AG04449 (cell line): ENCODE measurements at regions of chr4 and their contacts with region 1.

Region 1: GRCh38 chr4:6327041-6327917 is 57.6 kb downstream of the WFS1 start:
- DNase-seq: no peak
- H3K4me3 ChIP-seq: no peak overlapping the region
- CTCF ChIP-seq: peak; percentile 95

Region 2: DNA sequence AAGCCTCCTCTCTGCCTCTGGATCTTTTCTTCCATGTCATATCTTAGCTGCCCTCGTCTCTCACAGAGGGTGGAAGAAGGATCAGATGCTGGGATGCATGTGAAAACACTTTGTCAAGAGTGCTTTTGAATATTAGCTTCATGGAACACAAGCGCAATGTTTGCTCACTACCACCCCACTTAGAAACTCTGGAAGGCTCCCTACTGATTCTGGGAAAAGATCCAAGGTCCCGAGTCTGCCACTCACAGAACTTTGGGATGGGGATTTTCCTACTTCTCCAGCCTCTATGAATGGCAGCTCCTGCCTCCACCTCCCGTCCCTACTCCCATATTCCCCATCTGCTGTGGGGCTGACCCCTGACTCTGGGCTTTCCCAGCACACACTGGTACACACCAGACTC is 394.2 kb before region 1 on chr4:
- CTCF ChIA-PET with region 1: no interaction called
- POLR2A ChIA-PET with region 1: no interaction called
- DNase-seq: no peak
- H3K4me3 ChIP-seq: no peak overlapping the region
- CTCF ChIP-seq: no peak

Region 3: GRCh38 chr4:6269616-6270511 is 57.4 kb before region 1 on chr4 and contains the start of gene WFS1:
- CTCF ChIA-PET with region 1: interaction called, 1,359 read pairs
- POLR2A ChIA-PET with region 1: no interaction called
- DNase-seq: peak; percentile 83
- H3K4me3 ChIP-seq: peak within 1 kb of the TSS; percentile 87
- CTCF ChIP-seq: no peak

Region 4: DNA sequence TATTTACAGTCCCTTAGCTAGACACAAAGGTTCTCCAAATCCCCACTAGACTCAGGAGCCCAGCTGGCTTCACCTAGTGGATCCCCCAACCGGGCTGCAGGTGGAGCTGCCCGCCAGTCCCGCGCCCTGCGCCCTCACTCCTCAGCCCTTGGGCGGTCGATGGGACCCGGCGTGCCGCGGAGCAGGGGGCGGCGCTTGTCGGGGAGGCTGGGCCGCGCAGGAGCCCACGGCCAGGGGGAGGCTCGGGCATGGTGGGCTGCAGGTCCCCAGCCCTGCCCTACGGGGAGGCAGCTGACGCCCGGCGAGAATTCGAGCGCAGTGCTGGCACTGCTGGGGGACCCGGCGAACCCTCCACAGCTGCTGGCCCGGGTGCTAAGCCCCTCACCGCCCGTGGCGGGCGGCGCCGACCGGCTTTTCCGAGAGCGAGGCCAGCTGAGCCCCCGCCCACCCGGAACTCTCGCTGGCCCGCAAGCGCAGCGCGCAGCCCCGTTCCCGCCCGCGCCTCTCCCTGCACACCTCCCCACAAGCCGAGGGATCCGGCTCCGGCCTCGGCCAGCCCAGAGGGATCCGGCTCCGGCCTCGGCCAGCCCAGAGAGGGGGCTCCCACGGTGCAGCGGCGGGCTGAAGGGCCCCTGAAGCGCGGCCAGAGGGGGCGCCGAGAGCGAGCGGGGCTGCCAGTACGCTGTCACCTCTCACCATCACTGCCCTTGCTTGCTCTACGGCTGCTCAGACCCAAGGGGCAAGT is 18.2 kb before region 1 on chr4:
- CTCF ChIA-PET with region 1: interaction called, 11 read pairs
- POLR2A ChIA-PET with region 1: no interaction called
- DNase-seq: no peak
- H3K4me3 ChIP-seq: peak overlapping the region; percentile 29
- CTCF ChIP-seq: no peak

Region 5: DNA sequence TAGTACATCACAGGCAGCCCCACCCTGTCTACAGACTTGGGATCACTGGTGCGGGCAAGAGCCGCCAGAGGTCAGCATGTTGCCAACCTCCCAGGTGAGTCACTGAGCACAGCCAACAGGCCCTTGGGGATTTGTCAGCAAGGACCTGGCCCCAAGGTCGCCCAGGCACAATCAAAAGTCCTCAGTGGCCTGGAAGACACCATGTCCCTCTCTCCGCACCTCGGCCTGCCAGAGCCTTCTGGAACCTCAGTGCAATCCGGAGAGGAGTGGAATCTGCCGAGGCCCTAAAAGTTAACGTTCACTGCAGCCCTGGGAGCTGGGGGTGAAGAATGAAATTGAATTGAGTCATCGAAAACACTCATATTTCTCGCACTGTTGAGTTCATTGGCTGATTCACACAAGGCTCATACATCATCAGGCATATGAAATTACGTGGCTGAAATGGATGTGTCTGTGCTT is 16.7 kb after region 1 on chr4:
- CTCF ChIA-PET with region 1: interaction called, 178 read pairs
- POLR2A ChIA-PET with region 1: no interaction called
- DNase-seq: peak; percentile 19
- H3K4me3 ChIP-seq: no peak overlapping the region
- CTCF ChIP-seq: no peak